Body of pancreas (tissue), 4 donors: ENCODE measurements at regions of chr18 and their contacts with region 1.

Region 1: DNA sequence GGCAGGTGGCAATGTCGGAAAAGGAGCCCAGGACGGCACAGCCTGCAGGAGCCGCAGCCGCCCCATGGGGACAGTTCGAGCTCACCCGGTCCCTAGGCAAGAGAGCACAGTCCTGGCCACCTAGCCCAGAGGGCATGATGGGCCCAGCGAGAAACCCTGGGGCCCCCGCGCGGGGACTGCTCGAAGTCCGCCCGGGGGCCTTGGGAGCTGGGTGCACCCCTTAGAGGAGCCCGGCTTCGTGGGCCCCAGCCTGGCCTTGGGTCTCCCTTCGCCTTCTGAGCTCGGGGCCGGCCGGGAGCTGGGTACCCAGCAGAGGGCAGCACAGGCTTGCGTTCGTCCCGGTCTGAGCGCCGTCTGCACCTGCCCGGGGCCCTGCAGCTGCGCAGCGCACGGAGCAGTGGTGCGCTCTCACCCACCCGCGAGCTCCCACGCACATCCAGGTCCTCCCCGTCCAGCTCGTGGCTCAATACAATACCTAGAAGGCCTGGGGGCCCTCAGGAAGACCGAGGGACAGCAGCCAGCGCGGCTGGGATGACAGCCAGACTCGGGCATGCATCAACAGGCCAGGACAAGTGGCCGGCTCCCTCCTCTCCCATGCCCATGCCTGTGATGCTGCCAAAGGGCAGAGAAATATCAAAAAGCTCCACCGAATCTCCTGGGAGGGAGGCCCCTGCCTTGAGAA is 96.2 kb upstream of the ZNF532 start:
- DNase-seq: peak; percentile 73 to 81 (median 78)
- ATAC-seq: peak; percentile 91
- H3K4me3 ChIP-seq: no peak overlapping the region
- H3K27ac ChIP-seq: peak overlapping the region in 1 of 4 donors; percentile 1
- H3K4me1 ChIP-seq: peaks cover 14% of the 10 kb centered on the region
- H3K27me3 ChIP-seq: no peaks in the 10 kb centered on the region
- CTCF ChIP-seq: peak; percentile 58 to 77 (median 72)
- POLR2A ChIP-seq: no peak

Region 2: DNA sequence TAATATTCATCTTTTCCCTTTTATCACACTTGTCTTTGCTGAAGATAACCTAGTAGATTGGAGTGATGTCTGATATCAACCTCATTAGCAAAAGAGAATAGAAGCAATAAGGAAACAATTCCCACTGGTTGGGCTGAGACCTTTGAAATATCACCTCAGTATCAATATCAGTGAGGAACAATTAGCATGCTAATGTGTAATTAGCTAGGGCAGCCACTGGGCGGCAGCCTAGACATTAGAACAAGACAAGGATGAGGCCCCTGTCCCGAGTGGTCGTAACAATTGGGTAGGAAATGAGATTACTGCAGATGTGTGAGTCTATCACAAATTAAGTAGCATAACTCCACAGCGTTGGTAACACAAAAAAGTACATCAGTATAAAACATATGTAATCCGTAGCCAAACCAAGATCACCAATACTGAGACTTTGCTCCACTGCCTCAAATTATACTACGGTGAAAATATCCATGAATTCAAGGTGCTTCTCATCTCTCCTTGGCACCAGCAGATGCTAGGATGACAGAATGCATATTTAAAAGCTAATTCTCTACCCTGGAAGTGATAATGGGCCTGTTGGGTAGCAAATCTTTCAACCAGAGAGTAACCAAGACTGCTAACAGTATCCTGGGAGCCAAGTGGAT is 238.6 kb before region 1 on chr18:
- intact Hi-C with region 1: loop called (anchors 10 kb)
- DNase-seq: peak; percentile 54 to 77 (median 64)
- ATAC-seq: peak; percentile 49
- H3K4me3 ChIP-seq: no peak overlapping the region
- H3K27ac ChIP-seq: no peak overlapping the region
- H3K4me1 ChIP-seq: peaks cover 14% of the 10 kb centered on the region
- H3K27me3 ChIP-seq: no peaks in the 10 kb centered on the region
- CTCF ChIP-seq: peak; percentile 12 to 85 (median 70)
- POLR2A ChIP-seq: no peak

Region 3: DNA sequence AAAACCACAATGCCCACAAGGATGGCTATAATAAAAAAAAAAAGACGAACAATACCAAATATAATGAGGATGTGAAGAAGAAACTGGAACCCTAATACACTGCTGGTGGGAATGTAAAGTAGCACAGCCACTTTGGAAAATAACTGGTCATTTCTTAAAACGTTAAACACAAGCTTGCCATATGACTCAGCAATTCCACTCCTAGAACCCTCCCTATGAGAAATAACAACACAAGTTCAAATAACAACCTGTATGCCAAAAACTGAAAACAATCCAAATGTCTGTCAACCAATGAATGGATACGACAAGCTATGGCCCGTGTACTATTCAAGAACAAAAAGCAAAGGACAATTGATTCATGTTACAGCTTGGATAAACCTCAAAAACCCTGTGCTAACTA is 132.5 kb before region 1 on chr18:
- intact Hi-C with region 1: no loop called
- DNase-seq: no peak
- ATAC-seq: no peak
- H3K4me3 ChIP-seq: no peak overlapping the region
- H3K27ac ChIP-seq: no peak overlapping the region
- H3K4me1 ChIP-seq: no peaks in the 10 kb centered on the region
- H3K27me3 ChIP-seq: no peaks in the 10 kb centered on the region
- CTCF ChIP-seq: no peak
- POLR2A ChIP-seq: no peak

Region 4: GRCh38 chr18:58831606-58832005 is 63.2 kb after region 1 on chr18:
- intact Hi-C with region 1: no loop called
- DNase-seq: no peak
- ATAC-seq: no peak
- H3K4me3 ChIP-seq: no peak overlapping the region
- H3K27ac ChIP-seq: no peak overlapping the region
- H3K4me1 ChIP-seq: no peaks in the 10 kb centered on the region
- H3K27me3 ChIP-seq: no peaks in the 10 kb centered on the region
- CTCF ChIP-seq: no peak
- POLR2A ChIP-seq: no peak